ENCODE measurements at regions of chr22 and their contacts with region 1.

Region 1: GRCh38 chr22:26511857-26512793 is at the start of gene TFIP11:
- H3K4me3 Mint-ChIP-seq: peak within 1 kb of the TSS; percentile 100
- H3K27ac Mint-ChIP-seq: peak within 1 kb of the TSS; percentile 94
- H3K4me1 Mint-ChIP-seq: peaks cover 31% of the 10 kb centered on the region
- H3K27me3 Mint-ChIP-seq: no peaks in the 10 kb centered on the region

Region 2: GRCh38 chr22:26483439-26484359 is 28.4 kb before region 1 on chr22 and contains the starts of genes HPS4 and SRRD:
- intact Hi-C with region 1: loop called (anchors 1 kb)
- H3K4me3 Mint-ChIP-seq: peak within 1 kb of the TSS; percentile 86
- H3K27ac Mint-ChIP-seq: peak within 1 kb of the TSS; percentile 95
- H3K4me1 Mint-ChIP-seq: peaks cover 67% of the 10 kb centered on the region
- H3K27me3 Mint-ChIP-seq: no peaks in the 10 kb centered on the region

Region 3: GRCh38 chr22:26672590-26673468 is 160.7 kb after region 1 on chr22:
- intact Hi-C with region 1: loop called (anchors 2 kb)
- H3K4me3 Mint-ChIP-seq: peak overlapping the region; percentile 88
- H3K27ac Mint-ChIP-seq: peak overlapping the region; percentile 98
- H3K4me1 Mint-ChIP-seq: peaks cover 54% of the 10 kb centered on the region
- H3K27me3 Mint-ChIP-seq: no peaks in the 10 kb centered on the region

Measured in dendritic cell treated with granulocyte-macrophage colony-stimulating factor and Interleukin-4, amounts not matched to agents 40 ng/mL and 50 ng/mL, for 4 days (primary cell).